ENCODE measurements at regions of chr7 and their contacts with region 1.

Region 1: GRCh38 chr7:150778738-150779301 is 21.3 kb downstream of the TMEM176B start:
- DNase-seq: peak; percentile 77
- ATAC-seq: peak; percentile 79
- H3K4me3 Mint-ChIP-seq: no peak overlapping the region
- H3K27ac Mint-ChIP-seq: no peak overlapping the region
- H3K4me1 Mint-ChIP-seq: peaks cover 3% of the 10 kb centered on the region
- H3K27me3 Mint-ChIP-seq: peaks cover 32% of the 10 kb centered on the region

Region 2: GRCh38 chr7:150766334-150766709 is 12.5 kb before region 1 on chr7:
- CTCF ChIA-PET with region 1: interaction called, 10 read pairs
- DNase-seq: no peak
- ATAC-seq: no peak
- H3K4me3 Mint-ChIP-seq: no peak overlapping the region
- H3K27ac Mint-ChIP-seq: no peak overlapping the region
- H3K4me1 Mint-ChIP-seq: no peaks in the 10 kb centered on the region
- H3K27me3 Mint-ChIP-seq: peaks cover 3% of the 10 kb centered on the region

Measured in activated CD8-positive, alpha-beta memory T cell treated with anti-CD3 and anti-CD28 coated beads, Interleukin-2, amount 10 ng/mL, durations not matched to agents 7 days and 5 days (primary cell).